ENCODE measurements at regions of chr17 and their contacts with region 1.

Region 1: DNA sequence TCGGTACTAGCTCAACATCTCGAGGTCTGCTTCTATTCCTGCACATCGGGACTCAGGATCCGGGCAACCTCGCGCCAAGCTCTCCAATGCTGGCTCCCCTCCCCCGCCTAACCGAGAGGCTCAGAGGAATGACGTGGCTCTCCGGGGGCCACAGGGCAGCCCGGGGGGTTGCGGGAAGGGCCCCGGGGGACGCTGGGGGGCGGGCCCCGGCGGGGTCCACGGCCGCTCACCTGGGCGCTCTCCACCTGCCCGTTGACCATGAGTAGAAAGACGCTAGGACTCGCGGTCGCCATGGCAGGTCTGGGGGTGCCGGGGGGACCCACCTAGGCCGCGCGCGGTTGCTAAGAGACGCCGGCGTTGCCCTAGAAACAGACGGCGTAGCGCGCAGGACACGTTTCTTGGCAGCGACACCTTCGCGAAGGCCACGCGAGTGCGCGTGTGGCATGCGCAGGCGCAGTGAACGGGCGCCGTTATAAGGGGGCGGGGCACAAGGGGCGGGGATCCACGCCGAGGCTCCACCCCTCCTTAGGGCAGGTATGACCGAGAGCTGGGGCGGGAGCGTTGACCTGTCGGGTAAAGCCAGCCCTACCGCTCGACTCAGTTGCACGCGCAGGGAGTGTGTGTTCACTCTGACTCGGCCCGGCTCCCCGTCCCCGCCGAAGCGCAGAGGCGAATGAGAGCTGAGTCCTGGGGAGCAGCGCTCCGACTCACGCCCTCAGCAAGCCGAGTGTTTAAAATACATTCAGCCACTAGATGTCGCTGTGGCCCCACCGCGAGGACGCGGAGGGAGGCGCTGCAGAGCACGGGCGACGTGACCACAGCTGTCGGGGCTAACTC is at the start of gene B9D1:
- H3K4me3 Mint-ChIP-seq: peak within 1 kb of the TSS; percentile 76
- H3K27ac Mint-ChIP-seq: peak within 1 kb of the TSS; percentile 53
- H3K4me1 Mint-ChIP-seq: no peaks in the 10 kb centered on the region
- H3K27me3 Mint-ChIP-seq: peaks cover 67% of the 10 kb centered on the region

Region 2: GRCh38 chr17:19317359-19318095 is 45.0 kb before region 1 on chr17:
- intact Hi-C with region 1: no loop called
- H3K4me3 Mint-ChIP-seq: no peak overlapping the region
- H3K27ac Mint-ChIP-seq: no peak overlapping the region
- H3K4me1 Mint-ChIP-seq: peaks cover 20% of the 10 kb centered on the region
- H3K27me3 Mint-ChIP-seq: peaks cover 98% of the 10 kb centered on the region

Region 3: GRCh38 chr17:19377602-19378392 is 15.3 kb after region 1 on chr17:
- intact Hi-C with region 1: no loop called
- H3K4me3 Mint-ChIP-seq: peak overlapping the region; percentile 100
- H3K27ac Mint-ChIP-seq: peak overlapping the region; percentile 98
- H3K4me1 Mint-ChIP-seq: peaks cover 43% of the 10 kb centered on the region
- H3K27me3 Mint-ChIP-seq: no peaks in the 10 kb centered on the region

Region 4: GRCh38 chr17:19447085-19447583 is 84.6 kb after region 1 on chr17:
- intact Hi-C with region 1: loop called (anchors 1 kb)
- H3K4me3 Mint-ChIP-seq: no peak overlapping the region
- H3K27ac Mint-ChIP-seq: no peak overlapping the region
- H3K4me1 Mint-ChIP-seq: peaks cover 36% of the 10 kb centered on the region
- H3K27me3 Mint-ChIP-seq: peaks cover 38% of the 10 kb centered on the region

Region 5: DNA sequence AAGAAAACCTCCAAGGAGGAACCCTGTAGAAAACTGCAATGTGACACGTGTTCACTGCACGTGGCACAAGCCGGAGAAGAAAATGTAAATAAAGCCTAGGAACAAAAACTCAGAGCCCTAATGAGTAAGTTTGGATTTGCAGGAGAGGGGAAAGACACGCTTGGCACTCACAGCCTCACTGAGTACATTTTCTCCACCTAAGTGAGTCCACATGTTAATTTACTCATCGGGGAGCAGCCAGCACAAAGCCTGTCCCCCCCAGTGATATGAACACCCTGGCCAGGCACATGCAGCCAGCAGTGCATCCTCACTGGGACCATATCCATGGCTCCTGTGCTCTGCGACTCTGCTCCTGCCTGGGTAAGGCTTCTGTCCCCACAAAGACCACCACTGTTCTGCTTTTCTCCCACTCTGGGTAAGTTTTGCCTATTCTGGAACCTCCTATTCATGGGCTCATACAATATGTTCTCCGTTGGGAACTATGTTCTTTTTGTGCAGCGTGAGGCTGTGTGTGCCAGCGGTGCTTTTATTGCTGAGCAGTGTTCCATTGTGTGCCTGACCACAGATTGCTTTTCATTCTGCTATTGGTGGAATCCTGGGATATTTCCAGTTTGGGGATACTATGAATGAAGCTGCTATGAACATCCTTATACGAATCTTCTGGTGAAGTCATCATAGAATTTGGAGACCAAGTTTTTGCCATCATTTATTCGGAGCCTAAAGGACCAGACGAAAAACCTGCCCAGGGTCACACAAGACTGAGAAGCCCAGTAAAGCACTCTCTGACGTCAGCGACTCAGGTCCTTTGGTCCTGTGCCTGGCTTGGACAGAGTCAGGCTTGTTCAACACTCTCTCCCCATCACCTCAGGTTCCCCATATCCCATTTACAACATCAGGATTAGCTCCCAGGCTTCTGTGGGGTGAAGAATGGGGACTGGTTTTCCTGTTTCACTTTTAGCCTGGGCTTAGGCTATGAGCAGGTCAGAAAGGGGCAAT is 101.8 kb after region 1 on chr17:
- intact Hi-C with region 1: loop called (anchors 5 kb)
- H3K4me3 Mint-ChIP-seq: peak overlapping the region; percentile 69
- H3K27ac Mint-ChIP-seq: peak overlapping the region; percentile 89
- H3K4me1 Mint-ChIP-seq: peaks cover 54% of the 10 kb centered on the region
- H3K27me3 Mint-ChIP-seq: peaks cover 2% of the 10 kb centered on the region

Region 6: GRCh38 chr17:19648475-19649406 is 286.2 kb after region 1 on chr17 and contains the start of gene ALDH3A2:
- intact Hi-C with region 1: loop called (anchors 2 kb)
- H3K4me3 Mint-ChIP-seq: peak within 1 kb of the TSS; percentile 98
- H3K27ac Mint-ChIP-seq: peak within 1 kb of the TSS; percentile 99
- H3K4me1 Mint-ChIP-seq: peaks cover 61% of the 10 kb centered on the region
- H3K27me3 Mint-ChIP-seq: no peaks in the 10 kb centered on the region

Region 7: DNA sequence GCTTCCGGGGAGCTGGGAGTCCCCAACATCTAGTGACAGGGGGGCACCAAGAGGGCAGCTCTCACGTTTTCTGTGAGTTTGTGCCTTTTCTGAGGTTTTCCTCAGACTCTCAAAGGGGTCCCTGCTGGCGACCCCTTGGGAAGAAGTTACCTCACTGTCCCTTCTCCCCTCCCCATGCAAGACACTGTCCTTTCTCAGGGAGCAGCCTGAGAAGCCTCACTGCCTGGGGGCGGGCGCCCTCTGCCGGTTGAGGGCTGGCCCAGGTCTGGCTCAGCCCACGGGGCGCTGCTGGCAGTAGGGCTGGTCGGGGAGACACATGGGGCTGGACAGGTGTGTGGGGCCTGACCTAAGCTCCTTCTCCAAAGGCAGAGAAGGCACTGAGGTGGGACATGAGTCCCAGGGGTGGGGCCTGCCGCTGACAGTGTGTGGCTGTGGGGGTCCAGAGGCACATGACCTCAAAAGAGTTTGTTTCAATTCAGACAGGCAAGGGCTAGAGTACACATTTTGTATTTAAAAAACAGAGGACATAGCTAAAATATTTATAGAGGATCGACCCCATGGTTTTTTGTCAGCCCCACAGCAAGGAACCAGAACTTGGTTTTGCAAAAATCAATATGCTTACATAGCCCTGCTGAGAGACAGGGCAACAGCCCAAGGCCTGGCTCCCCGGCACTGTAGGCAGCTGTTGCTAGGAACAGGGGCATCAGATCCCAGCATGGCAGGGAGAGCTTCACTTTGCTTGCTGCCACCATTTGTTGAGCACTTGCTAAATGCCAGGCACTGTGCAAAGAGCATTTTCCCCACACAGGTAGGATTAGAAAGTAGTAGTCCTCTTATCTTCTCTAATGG is 404.2 kb after region 1 on chr17:
- intact Hi-C with region 1: loop called (anchors 1 kb)
- H3K4me3 Mint-ChIP-seq: no peak overlapping the region
- H3K27ac Mint-ChIP-seq: no peak overlapping the region
- H3K4me1 Mint-ChIP-seq: peaks cover 18% of the 10 kb centered on the region
- H3K27me3 Mint-ChIP-seq: peaks cover 13% of the 10 kb centered on the region